CD8-positive, alpha-beta T cell (primary cell): ENCODE measurements at regions of chr2 and their contacts with region 1.

Region 1: DNA sequence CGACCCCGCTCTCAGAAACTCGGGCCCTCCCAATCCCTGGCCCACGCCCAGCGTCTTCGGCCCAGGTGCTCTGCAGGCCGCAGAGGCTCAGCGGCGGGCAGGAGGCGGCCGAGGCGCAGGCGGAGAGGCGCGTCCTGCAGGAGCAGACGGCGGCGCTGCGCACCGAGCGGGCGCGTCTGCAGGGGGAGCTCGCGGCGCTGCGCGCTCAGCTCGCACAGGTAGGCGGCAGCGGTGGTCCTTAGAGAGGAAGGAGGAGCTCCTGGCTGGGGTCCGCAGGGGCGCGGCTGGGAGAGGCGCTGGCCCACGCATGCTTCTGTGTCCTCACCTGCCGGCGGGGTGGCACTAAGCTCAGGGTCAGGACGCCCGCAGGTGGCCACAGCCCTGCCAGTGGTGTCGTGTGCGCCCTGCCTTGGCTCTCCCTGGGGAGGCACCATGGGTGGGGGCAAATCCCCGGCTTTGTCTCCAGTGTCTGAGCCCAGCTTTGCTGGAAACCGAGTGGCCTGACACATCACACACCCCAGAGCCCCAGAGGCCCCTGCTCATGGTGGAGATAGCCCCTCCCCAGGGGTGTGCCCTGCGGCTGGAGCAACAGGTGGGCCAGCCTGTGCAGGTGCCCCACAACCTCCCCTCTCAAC is 14.9 kb upstream of the SNED1 start:
- DNase-seq: peak; percentile 15 to 81 (median 49)
- ATAC-seq: peak; percentile 94
- H3K4me3 ChIP-seq: no peak overlapping the region
- H3K4me3 Mint-ChIP-seq: no peak overlapping the region
- H3K27ac ChIP-seq: no peak overlapping the region
- H3K27ac Mint-ChIP-seq: no peak overlapping the region
- H3K4me1 ChIP-seq: no peaks in the 10 kb centered on the region
- H3K4me1 Mint-ChIP-seq: peaks cover 3% of the 10 kb centered on the region
- H3K27me3 ChIP-seq: no peaks in the 10 kb centered on the region
- H3K27me3 Mint-ChIP-seq: no peaks in the 10 kb centered on the region
- CTCF ChIP-seq: peak; percentile 65

Region 2: GRCh38 chr2:240972636-240973521 is 10.6 kb before region 1 on chr2:
- CTCF ChIA-PET with region 1: interaction called, 11 read pairs
- POLR2A ChIA-PET with region 1: no interaction called
- intact Hi-C with region 1: no loop called
- DNase-seq: no peak
- ATAC-seq: no peak
- H3K4me3 ChIP-seq: no peak overlapping the region
- H3K4me3 Mint-ChIP-seq: no peak overlapping the region
- H3K27ac ChIP-seq: no peak overlapping the region
- H3K27ac Mint-ChIP-seq: no peak overlapping the region
- H3K4me1 ChIP-seq: peaks cover 9% of the 10 kb centered on the region
- H3K4me1 Mint-ChIP-seq: peaks cover 6% of the 10 kb centered on the region
- H3K27me3 ChIP-seq: no peaks in the 10 kb centered on the region
- H3K27me3 Mint-ChIP-seq: peaks cover 20% of the 10 kb centered on the region
- CTCF ChIP-seq: no peak